ENCODE measurements at regions of chr19 and their contacts with region 1.

Region 1: DNA sequence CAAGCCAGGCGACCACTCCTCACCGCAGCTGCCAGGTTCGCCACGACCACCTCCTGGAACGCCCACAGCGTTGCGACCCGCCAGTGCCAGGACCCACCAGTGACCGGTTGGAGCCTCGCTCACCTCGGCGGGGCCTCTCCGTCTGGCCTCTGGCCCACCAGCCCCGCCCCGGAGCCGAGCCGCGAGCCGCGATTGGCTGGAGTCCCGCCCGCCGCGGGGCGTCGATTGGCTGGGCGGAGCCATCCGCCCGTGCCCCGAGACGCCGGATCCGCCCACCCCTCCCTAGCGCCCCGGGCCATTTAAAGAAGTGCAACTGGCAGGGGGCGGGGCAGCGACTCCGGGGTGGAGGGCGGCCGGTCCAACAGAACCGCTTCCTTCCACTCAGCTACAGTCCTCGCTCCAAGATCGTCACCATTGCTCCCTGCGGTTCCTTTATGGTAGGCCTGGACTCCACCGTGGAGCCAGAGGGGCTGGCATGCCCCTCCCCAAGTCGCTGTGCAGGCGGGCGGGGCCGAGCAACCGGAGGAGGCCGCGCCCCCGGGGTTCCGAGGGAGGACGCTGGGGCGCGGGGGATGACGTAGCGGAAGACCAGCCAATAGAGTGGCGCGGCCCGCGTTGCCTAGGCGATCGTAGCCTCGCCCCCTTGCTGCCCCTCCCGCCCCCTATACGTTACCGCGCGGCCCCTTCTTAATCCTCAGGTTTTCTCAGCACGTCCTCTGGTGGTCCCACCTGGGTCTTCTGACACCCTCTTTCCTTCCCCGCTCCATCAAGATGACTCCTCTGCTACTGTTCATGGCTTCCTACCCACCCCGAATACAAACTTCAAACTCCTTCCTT is at the start of gene SERTAD3:
- DNase-seq: peak; percentile 98
- H3K4me3 ChIP-seq: peak within 1 kb of the TSS; percentile 82
- H3K27ac ChIP-seq: peak within 1 kb of the TSS; percentile 96
- H3K4me1 ChIP-seq: peaks cover 22% of the 10 kb centered on the region
- H3K27me3 ChIP-seq: no peaks in the 10 kb centered on the region
- CTCF ChIP-seq: peak; percentile 52
- total RNA-seq, gene SERTAD3: 26.3 and 28.7 TPM in 2 replicates

Region 2: GRCh38 chr19:40274585-40275552 is 169.5 kb before region 1 on chr19:
- CTCF ChIA-PET with region 1: no interaction called
- POLR2A ChIA-PET with region 1: no interaction called
- intact Hi-C with region 1: no loop called
- DNase-seq: no peak
- H3K4me3 ChIP-seq: no peak overlapping the region
- H3K27ac ChIP-seq: no peak overlapping the region
- H3K4me1 ChIP-seq: peaks cover 15% of the 10 kb centered on the region
- H3K27me3 ChIP-seq: no peaks in the 10 kb centered on the region
- CTCF ChIP-seq: no peak

Region 3: GRCh38 chr19:40465557-40466150 is 21.2 kb after region 1 on chr19 and contains the start of gene BLVRB:
- CTCF ChIA-PET with region 1: interaction called, 7 read pairs
- POLR2A ChIA-PET with region 1: no interaction called
- intact Hi-C with region 1: loop called (anchors 1 kb)
- DNase-seq: peak; percentile 99
- H3K4me3 ChIP-seq: peak within 1 kb of the TSS; percentile 73
- H3K27ac ChIP-seq: peak within 1 kb of the TSS; percentile 64
- H3K4me1 ChIP-seq: peaks cover 22% of the 10 kb centered on the region
- H3K27me3 ChIP-seq: no peaks in the 10 kb centered on the region
- CTCF ChIP-seq: no peak
- total RNA-seq, gene BLVRB: 36.1 and 48.2 TPM in 2 replicates